A549 (cell line): ENCODE measurements at regions of chr5 and their contacts with region 1.

Region 1: GRCh38 chr5:176994460-176995121 is 12.0 kb downstream of the UIMC1 start:
- DNase-seq: peak in 1 of 2 experiments; percentile 41
- ATAC-seq: no peak
- H3K4me3 ChIP-seq: no peak overlapping the region
- H3K27ac ChIP-seq: no peak overlapping the region
- H3K4me1 ChIP-seq: peaks cover 16% of the 10 kb centered on the region
- CTCF ChIP-seq: no peak
- EP300 ChIP-seq: no peak
- POLR2A ChIP-seq: no peak
- RAD21 ChIP-seq: no peak

Region 2: DNA sequence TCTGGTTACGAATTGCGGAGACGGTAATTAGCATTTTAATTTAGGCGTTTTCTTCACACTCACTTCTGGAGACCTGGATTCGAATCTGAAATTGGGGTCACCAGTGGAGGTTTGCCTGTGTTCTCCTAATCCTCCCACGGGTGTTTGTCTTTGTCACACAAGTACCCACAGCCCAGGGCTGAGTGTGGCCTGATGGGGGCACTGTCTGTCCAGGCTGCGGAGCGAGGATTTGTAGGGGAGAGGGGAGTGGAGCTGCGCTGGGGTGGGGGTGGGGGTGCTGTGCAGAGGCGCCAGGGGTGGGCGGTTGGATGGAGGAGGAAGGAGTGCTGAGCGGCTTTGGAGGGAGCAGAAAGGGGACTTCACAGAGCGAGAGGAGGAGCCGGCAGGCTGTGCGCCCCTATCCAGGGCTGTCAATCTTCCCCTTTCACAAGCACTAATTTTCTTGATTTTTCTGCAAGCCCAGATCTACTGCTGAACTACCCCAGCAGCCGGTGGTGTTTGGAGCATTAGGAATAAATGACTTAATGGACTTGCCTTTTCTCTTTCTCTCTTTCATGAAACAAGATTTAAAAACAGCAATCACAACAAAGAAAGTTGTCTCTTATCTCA is 294.2 kb before region 1 on chr5:
- CTCF ChIA-PET with region 1: no interaction called
- POLR2A ChIA-PET with region 1: no interaction called
- DNase-seq: peak; percentile 24 to 34
- ATAC-seq: peak in 1 of 2 experiments; percentile 77; a peak in 3 of 6 replicates
- H3K4me3 ChIP-seq: no peak overlapping the region
- H3K27ac ChIP-seq: no peak overlapping the region
- H3K4me1 ChIP-seq: no peaks in the 10 kb centered on the region
- CTCF ChIP-seq: peak; percentile 51
- EP300 ChIP-seq: no peak
- POLR2A ChIP-seq: no peak
- RAD21 ChIP-seq: peak; percentile 64 to 68

Region 3: DNA sequence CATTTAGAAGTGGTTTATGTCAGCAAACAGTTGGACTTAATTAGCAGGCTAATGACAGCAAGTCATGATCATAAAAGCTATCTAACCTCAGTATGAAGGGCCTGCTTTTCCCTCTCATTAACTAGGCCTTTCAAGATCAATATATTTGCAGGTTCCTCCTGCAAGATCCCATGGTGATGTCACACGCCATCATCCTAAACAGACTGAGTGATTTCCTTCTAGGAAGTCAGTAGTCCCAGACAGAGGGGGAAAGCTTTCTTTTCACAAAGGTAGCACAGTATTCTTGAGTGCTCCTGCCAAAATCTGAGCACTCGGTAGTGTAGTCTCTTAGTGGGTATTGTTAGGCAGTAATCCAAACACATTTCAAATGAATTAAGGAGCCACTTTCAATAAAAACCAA is 40.5 kb before region 1 on chr5:
- CTCF ChIA-PET with region 1: no interaction called
- POLR2A ChIA-PET with region 1: no interaction called
- DNase-seq: no peak
- ATAC-seq: no peak
- H3K4me3 ChIP-seq: no peak overlapping the region
- H3K27ac ChIP-seq: no peak overlapping the region
- H3K4me1 ChIP-seq: no peaks in the 10 kb centered on the region
- CTCF ChIP-seq: no peak
- EP300 ChIP-seq: no peak
- POLR2A ChIP-seq: no peak
- RAD21 ChIP-seq: no peak

Region 4: DNA sequence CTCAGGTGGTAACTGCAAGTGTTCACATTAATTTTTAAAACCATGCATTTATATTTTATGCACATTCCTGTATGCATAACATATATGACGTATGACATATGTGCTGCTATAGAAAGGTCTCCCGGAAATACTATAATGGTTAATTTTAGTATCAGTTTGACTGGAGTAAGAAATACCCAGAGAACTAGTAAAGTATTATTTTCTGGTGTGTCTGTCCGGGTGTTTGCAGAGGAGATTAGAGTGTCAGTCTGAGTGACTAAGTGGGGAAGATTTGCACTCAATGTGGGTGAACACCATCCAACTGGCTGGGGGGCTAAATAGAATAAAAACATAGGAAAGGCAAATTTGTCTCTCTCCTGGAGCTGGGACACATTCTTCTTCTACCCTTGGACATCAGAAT is 14.9 kb before region 1 on chr5:
- CTCF ChIA-PET with region 1: no interaction called
- POLR2A ChIA-PET with region 1: no interaction called
- DNase-seq: no peak
- ATAC-seq: no peak
- H3K4me3 ChIP-seq: no peak overlapping the region
- H3K27ac ChIP-seq: no peak overlapping the region
- H3K4me1 ChIP-seq: no peaks in the 10 kb centered on the region
- CTCF ChIP-seq: no peak
- EP300 ChIP-seq: no peak
- POLR2A ChIP-seq: no peak
- RAD21 ChIP-seq: no peak

Region 5: DNA sequence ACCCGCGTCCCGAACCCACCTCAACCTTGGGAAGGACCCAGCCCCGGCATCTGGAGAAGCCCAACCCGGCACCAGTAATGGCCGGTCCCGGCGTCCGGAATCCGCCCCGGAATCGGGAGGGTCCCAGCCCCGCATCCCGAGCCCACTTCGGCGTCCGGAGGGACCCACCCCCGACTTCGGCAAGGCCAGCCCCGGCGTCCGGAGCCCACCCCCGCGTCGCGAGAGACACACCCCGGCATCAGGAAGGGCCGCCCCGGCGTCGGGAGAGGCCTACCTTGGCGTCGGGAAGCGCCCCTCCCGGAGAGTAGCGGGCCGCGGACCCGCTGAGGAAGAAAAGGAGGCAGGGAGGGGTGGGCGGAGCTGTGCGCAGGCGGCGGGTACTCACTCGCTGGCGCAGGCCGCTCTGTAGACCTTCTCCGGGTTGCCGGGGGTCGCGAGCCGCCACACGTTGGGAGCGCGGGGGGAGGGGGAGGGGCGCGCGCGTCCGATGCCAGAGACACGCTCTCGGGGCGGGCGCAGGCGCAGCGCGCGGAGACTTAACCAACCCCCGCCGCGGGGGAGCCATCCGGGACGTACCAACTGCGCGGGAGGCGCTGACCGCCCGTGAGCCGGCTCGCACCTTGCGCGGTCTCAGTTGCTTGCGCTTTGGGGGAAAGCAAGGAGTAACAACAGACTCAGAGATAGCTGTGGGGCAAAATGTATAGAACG is 11.8 kb after region 1 on chr5 and contains the start of gene UIMC1:
- CTCF ChIA-PET with region 1: interaction called, 10 read pairs
- POLR2A ChIA-PET with region 1: no interaction called
- DNase-seq: peak; percentile 73 to 97
- ATAC-seq: peak; percentile 87 to 91
- H3K4me3 ChIP-seq: peak within 1 kb of the TSS; percentile 94
- H3K27ac ChIP-seq: peak within 1 kb of the TSS; percentile 95 to 96
- H3K4me1 ChIP-seq: peaks cover 20% of the 10 kb centered on the region
- CTCF ChIP-seq: no peak
- EP300 ChIP-seq: no peak
- POLR2A ChIP-seq: peak; percentile 25; the same call in 1 of the 2 replicates
- RAD21 ChIP-seq: no peak
- polyA plus RNA-seq, gene UIMC1: 50.6 and 52.5 TPM in 2 replicates